ENCODE measurements at regions of chr22 and their contacts with region 1.

Region 1: DNA sequence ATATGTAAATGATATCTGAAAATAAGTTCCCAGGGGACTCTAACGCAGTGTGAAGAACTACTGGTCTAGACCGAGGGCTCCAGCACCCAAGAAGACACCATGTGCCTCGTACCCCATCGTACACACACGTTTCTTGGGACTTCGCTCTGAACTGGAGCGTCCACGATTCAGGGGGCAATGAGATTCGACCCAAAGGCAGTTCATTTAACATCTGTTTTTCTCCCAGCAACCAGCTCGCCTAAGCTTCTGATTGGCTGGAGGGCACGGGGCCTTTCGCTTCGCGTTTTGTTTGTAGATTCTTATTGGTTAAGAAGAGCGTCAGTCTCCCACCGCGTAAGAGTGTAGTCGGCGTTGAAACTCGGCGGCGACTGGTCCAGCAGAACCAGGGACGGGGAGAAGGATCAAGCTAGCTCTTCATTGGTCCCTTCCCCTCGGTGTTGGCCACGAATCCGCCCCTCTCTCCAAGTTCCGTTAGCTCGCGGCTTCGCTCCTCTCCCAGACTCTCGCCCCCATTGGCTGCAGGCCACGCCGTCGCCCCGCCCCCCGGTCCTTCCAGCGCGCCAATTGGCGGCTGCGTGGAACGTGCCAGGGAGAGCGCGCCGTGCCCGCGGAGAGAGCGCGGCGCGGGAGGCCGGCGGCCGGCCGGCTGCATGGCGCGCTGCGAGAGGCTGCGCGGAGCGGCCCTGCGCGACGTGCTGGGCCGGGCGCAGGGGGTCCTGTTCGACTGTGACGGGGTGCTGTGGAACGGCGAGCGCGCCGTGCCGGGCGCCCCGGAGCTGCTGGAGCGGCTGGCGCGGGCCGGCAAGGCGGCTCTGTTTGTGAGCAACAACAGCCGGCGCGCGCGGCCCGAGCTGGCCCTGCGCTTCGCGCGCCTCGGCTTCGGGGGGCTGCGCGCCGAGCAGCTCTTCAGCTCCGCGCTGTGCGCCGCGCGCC is at the start of gene PDXP:
- DNase-seq: peak; percentile 99
- ATAC-seq: peak; percentile 98
- H3K4me3 Mint-ChIP-seq: peak within 1 kb of the TSS; percentile 86
- H3K27ac Mint-ChIP-seq: peak within 1 kb of the TSS; percentile 91
- H3K4me1 Mint-ChIP-seq: peaks cover 31% of the 10 kb centered on the region
- H3K27me3 Mint-ChIP-seq: no peaks in the 10 kb centered on the region
- total RNA-seq, gene PDXP: 35.8 to 37.8 TPM

Region 2: DNA sequence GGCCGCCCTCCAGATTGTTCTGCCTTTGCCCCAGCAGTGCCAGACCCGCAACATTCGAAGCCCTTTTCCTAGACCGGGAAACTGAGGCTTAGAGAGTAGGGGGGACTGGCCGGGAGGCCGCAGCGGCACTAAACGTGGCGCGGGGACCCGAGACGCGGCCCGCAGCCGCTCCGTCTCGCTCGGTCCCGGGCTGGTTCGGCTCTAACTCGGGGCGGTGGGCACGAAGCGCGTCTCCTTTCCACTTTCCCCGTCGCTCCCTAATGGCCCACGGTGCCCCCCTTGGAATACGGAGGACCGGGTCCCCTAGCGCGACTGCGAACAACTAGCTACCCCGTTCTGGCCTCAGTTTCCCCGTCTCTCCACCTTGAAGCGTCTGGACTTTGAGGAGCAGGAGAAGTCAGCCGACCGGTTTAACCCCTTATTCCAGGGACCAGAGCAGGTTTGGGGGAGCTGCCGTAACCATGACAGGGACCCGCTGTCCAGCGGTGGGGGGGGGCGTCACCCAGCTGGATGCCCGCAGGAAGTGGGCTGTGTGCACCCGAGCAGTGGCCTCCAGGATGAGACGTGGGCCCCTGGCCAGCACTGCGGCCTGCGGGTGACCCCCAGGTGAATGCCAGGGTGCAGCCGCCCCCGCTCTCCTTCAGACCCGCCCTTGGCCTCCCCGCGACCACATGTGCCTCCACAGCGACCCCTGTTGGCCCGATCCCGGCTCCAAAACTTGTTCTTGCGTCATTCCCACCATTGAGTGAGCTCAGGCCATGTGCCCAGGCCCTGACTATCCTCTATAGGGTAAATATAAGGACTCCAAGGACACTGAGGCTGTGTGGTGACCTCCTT is 97.0 kb before region 1 on chr22:
- CTCF ChIA-PET with region 1: no interaction called
- POLR2A ChIA-PET with region 1: no interaction called
- intact Hi-C with region 1: no loop called
- DNase-seq: peak; percentile 92
- ATAC-seq: peak; percentile 71
- H3K4me3 Mint-ChIP-seq: peak overlapping the region; percentile 57
- H3K27ac Mint-ChIP-seq: peak overlapping the region; percentile 51
- H3K4me1 Mint-ChIP-seq: peaks cover 20% of the 10 kb centered on the region
- H3K27me3 Mint-ChIP-seq: peaks cover 45% of the 10 kb centered on the region

Region 3: GRCh38 chr22:37633625-37634416 is 24.6 kb before region 1 on chr22:
- CTCF ChIA-PET with region 1: interaction called, 18 read pairs
- POLR2A ChIA-PET with region 1: interaction called, 10 read pairs
- intact Hi-C with region 1: loop called in 1 of 2 experiments (anchors 1 kb)
- DNase-seq: peak; percentile 86
- ATAC-seq: peak; percentile 70
- H3K4me3 Mint-ChIP-seq: peak overlapping the region; percentile 58
- H3K27ac Mint-ChIP-seq: peak overlapping the region; percentile 93
- H3K4me1 Mint-ChIP-seq: peaks cover 56% of the 10 kb centered on the region
- H3K27me3 Mint-ChIP-seq: no peaks in the 10 kb centered on the region

Region 4: GRCh38 chr22:37676736-37677492 is 18.5 kb after region 1 on chr22:
- CTCF ChIA-PET with region 1: interaction called, 44 read pairs
- POLR2A ChIA-PET with region 1: interaction called, 8 read pairs
- intact Hi-C with region 1: loop called (anchors 1 kb)
- DNase-seq: peak; percentile 97
- ATAC-seq: peak; percentile 78
- H3K4me3 Mint-ChIP-seq: peak overlapping the region; percentile 89
- H3K27ac Mint-ChIP-seq: peak overlapping the region; percentile 96
- H3K4me1 Mint-ChIP-seq: peaks cover 57% of the 10 kb centered on the region
- H3K27me3 Mint-ChIP-seq: no peaks in the 10 kb centered on the region

Region 5: DNA sequence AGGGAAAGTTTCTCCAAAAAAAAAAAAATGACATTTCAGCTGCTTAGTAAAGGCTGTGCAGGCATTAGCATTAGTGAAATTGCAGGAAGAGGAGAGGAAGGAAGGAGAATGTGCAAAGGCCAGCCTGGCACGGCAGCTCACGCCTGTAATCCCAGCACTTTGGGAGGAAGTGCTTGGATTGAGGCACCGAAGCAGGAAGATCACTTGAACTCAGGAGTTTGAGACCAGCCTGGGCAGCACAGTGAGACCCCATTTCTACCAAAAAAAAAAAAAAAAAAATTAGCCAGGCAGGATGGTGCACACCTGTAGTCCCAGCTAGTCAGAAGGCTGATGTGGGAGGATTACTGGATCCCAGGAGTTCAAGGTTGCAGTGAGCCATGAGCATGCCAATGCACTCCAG is 46.2 kb after region 1 on chr22:
- CTCF ChIA-PET with region 1: no interaction called
- POLR2A ChIA-PET with region 1: no interaction called
- intact Hi-C with region 1: no loop called
- DNase-seq: no peak
- ATAC-seq: no peak
- H3K4me3 Mint-ChIP-seq: no peak overlapping the region
- H3K27ac Mint-ChIP-seq: no peak overlapping the region
- H3K4me1 Mint-ChIP-seq: no peaks in the 10 kb centered on the region
- H3K27me3 Mint-ChIP-seq: no peaks in the 10 kb centered on the region

Region 6: DNA sequence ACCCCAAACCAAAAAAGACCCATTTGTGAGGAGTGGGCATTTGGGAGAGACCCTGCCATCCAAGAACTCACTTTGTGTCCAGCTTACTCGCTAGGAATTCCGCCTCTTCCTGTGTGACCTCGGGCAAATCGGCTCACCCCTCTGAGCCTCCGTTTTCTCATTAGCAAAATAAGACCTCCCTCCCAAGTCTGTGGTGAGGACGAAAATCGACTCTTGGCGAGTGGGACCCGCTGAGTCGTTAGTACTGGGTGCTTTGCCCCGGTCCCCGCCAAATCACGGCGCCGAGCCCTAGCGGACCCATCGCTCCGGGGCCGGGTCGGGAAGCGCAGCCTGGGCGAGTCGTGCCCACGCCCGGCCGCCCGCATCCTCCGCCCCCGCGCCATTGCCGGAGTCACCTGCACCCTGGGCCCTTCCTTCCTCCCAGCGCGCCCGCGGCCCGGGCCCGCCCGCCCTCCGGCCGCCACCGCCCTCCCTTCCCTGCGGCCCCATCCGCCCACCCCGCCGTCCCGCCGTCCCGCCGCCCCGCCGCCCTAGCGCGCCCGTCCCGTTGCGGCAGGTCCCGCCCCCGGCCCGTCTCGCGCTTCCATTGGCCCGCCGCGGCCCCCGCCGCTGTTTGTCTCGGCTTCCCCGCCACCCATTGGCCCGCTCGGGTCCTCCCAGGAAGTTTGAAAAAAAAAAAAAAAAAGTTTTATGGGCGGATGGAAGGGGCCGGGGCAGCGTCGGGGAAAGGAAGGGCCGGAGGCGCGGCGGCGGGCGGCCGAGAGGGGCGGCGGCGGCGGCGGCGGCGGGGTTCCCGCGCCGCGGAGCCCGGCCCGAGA is 87.4 kb after region 1 on chr22:
- CTCF ChIA-PET with region 1: no interaction called
- POLR2A ChIA-PET with region 1: no interaction called
- intact Hi-C with region 1: loop called in 1 of 2 experiments (anchors 1 kb)
- DNase-seq: peak; percentile 95
- ATAC-seq: peak; percentile 91
- H3K4me3 Mint-ChIP-seq: peak overlapping the region; percentile 84
- H3K27ac Mint-ChIP-seq: peak overlapping the region; percentile 90
- H3K4me1 Mint-ChIP-seq: peaks cover 25% of the 10 kb centered on the region
- H3K27me3 Mint-ChIP-seq: no peaks in the 10 kb centered on the region